ENCODE measurements at regions of chr19 and their contacts with region 1.

Region 1: GRCh38 chr19:40716655-40717324 is at the starts of genes COQ8B and ITPKC:
- DNase-seq: peak; percentile 100
- ATAC-seq: peak; percentile 65
- H3K4me3 Mint-ChIP-seq: peak within 1 kb of the TSS; percentile 93
- H3K27ac Mint-ChIP-seq: peak within 1 kb of the TSS; percentile 98
- H3K4me1 Mint-ChIP-seq: peaks cover 59% of the 10 kb centered on the region
- H3K27me3 Mint-ChIP-seq: no peaks in the 10 kb centered on the region
- total RNA-seq, gene COQ8B: 21.2 to 29.9 TPM
- total RNA-seq, gene ITPKC: 4.6 to 5.6 TPM

Region 2: GRCh38 chr19:39390755-39391592 is 1325.8 kb before region 1 on chr19 and contains the starts of genes MED29 and PAF1:
- CTCF ChIA-PET with region 1: no interaction called
- POLR2A ChIA-PET with region 1: no interaction called
- intact Hi-C with region 1: loop called in 1 of 2 experiments (anchors 5 kb)
- DNase-seq: peak; percentile 98
- ATAC-seq: peak; percentile 97
- H3K4me3 Mint-ChIP-seq: peak within 1 kb of the TSS; percentile 99
- H3K27ac Mint-ChIP-seq: peak within 1 kb of the TSS; percentile 98
- H3K4me1 Mint-ChIP-seq: peaks cover 28% of the 10 kb centered on the region
- H3K27me3 Mint-ChIP-seq: no peaks in the 10 kb centered on the region
- total RNA-seq, gene MED29: 24.0 to 34.6 TPM
- total RNA-seq, gene PAF1: 40.4 to 54.2 TPM

Region 3: GRCh38 chr19:40425450-40426287 is 291.1 kb before region 1 on chr19 and contains the start of gene SERTAD1:
- CTCF ChIA-PET with region 1: no interaction called
- POLR2A ChIA-PET with region 1: no interaction called
- intact Hi-C with region 1: loop called in 1 of 2 experiments (anchors 5 kb)
- DNase-seq: peak; percentile 100
- ATAC-seq: peak; percentile 91
- H3K4me3 Mint-ChIP-seq: peak within 1 kb of the TSS; percentile 89
- H3K27ac Mint-ChIP-seq: peak within 1 kb of the TSS; percentile 96
- H3K4me1 Mint-ChIP-seq: peaks cover 20% of the 10 kb centered on the region
- H3K27me3 Mint-ChIP-seq: no peaks in the 10 kb centered on the region
- total RNA-seq, gene SERTAD1: 10.0 to 14.7 TPM

Region 4: GRCh38 chr19:40614622-40615411 is 102.0 kb before region 1 on chr19:
- CTCF ChIA-PET with region 1: no interaction called
- POLR2A ChIA-PET with region 1: no interaction called
- intact Hi-C with region 1: loop called in 1 of 2 experiments (anchors 1 kb)
- DNase-seq: peak; percentile 98
- ATAC-seq: peak; percentile 55
- H3K4me3 Mint-ChIP-seq: peak overlapping the region; percentile 99
- H3K27ac Mint-ChIP-seq: peak overlapping the region; percentile 100
- H3K4me1 Mint-ChIP-seq: peaks cover 58% of the 10 kb centered on the region
- H3K27me3 Mint-ChIP-seq: no peaks in the 10 kb centered on the region

Region 5: GRCh38 chr19:40627486-40628279 is 89.1 kb before region 1 on chr19:
- CTCF ChIA-PET with region 1: no interaction called
- POLR2A ChIA-PET with region 1: no interaction called
- intact Hi-C with region 1: no loop called
- DNase-seq: no peak
- ATAC-seq: peak; percentile 48
- H3K4me3 Mint-ChIP-seq: no peak overlapping the region
- H3K27ac Mint-ChIP-seq: no peak overlapping the region
- H3K4me1 Mint-ChIP-seq: peaks cover 6% of the 10 kb centered on the region
- H3K27me3 Mint-ChIP-seq: no peaks in the 10 kb centered on the region

Region 6: DNA sequence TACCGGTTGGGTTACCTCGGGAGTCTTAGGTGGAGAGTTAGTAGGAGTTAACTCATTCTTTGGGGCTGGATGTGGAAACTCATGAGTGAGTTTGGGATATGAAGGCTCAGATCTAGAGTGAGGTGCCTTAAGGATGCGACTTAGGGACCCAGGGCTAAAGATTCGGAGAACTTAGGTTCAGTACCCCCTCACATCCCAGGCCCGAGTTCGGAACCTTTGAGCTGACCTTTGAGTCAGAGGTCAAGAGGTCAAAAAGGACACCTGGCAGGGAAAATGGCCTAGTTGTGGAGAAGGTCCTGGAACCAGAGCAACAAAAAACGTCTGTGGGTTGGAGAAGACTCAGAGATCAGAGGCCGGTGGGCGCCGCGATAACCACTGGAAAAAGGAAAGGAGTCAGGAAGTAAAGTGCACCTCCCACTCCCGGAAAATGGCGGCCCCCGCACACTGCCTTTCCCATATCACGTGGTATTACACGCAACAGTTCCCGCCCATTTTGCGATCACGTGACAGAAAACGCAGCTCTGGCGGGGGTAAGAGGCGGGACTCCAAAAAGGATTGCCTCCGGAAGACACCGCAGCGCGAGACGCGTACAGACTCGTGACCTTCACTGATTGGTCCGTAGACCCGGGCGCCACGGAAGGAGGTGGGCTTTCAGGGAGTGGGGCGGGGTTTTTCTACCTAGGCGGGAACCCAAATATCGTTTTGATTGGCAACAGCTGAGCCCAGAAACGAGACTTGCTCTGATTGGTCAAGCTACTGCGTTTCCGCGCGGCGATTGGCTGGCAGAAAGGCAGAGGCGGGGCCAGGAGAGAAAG is 33.5 kb after region 1 on chr19 and contains the start of gene ACTMAP:
- CTCF ChIA-PET with region 1: interaction called, 4 read pairs
- POLR2A ChIA-PET with region 1: interaction called, 21 read pairs
- intact Hi-C with region 1: loop called (anchors 1 kb)
- DNase-seq: peak; percentile 100
- ATAC-seq: peak; percentile 90
- H3K4me3 Mint-ChIP-seq: peak within 1 kb of the TSS; percentile 81
- H3K27ac Mint-ChIP-seq: peak within 1 kb of the TSS; percentile 99
- H3K4me1 Mint-ChIP-seq: peaks cover 34% of the 10 kb centered on the region
- H3K27me3 Mint-ChIP-seq: no peaks in the 10 kb centered on the region
- total RNA-seq, gene ACTMAP: 15.0 to 18.0 TPM

Region 7: DNA sequence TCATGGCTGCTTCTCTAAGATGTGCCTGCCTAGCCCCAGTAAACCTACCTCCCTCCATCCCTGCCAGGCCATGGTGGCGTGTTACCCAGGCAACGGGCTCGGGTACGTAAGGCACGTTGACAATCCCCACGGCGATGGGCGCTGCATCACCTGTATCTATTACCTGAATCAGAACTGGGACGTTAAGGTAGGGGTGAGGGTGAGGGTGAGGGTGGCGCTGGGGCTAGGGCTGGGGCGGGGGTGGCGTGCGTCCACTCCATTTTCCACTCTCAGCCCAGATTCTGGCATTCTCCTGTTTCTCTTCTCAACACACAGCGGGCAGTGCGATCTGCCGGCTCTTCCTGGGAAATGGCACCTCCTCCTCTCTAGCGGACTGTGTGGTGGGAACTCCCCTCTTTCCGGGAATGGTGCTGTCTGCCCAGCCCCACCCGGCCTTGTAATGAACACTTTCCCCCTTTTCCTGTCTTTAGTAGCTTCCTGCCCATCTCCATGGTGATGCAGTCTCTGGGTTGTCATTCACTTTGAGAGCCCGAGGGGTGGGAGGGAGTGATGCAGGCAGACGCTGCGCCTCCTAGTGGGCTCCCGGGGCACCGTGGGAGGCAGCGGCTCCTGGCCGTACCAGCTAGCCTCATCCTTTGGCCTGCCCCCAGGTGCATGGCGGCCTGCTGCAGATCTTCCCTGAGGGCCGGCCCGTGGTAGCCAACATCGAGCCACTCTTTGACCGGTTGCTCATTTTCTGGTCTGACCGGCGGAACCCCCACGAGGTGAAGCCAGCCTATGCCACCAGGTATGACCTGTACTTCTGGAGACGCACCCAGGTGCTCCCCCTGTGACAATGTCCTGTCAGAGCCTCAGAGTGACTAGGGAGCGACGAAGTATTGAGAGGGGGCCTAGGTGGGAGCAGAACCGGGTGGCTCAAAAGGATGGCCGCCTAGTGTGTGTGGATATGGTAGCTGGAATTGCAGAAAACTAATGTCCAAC is 90.0 kb after region 1 on chr19:
- CTCF ChIA-PET with region 1: interaction called, 11 read pairs
- POLR2A ChIA-PET with region 1: no interaction called
- intact Hi-C with region 1: loop called in 1 of 2 experiments (anchors 2 kb)
- DNase-seq: peak; percentile 90
- ATAC-seq: peak; percentile 51
- H3K4me3 Mint-ChIP-seq: peak overlapping the region; percentile 55
- H3K27ac Mint-ChIP-seq: peak overlapping the region; percentile 89
- H3K4me1 Mint-ChIP-seq: peaks cover 72% of the 10 kb centered on the region
- H3K27me3 Mint-ChIP-seq: no peaks in the 10 kb centered on the region

Region 8: DNA sequence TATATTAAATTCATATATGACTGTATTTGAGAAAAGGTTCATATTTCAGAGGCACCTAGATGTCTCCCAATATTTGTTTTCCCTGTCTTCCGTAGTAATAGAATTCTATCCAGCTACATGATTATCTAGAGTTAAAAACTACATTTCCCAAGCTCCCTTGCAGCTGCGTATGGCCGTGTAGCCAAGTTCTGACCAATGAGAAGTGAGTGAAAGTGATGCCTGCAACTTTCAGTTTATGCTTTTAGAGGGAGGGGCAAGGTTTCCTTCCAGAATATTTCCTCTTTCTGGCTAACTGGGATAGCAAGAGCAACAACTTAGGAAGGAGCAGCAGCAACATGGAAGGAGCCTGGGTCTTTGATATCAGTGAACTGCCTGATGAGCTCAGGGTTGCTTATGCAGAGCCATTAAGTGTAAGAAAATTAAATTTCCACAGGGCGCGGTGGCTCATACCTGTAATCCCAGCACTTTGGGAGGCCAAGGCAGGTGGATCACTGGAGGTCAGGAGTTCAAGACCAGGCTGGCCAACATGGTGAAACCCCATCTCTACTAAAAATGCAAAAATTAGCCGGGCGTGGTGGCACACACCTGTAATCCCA is 348.3 kb after region 1 on chr19:
- CTCF ChIA-PET with region 1: no interaction called
- POLR2A ChIA-PET with region 1: no interaction called
- intact Hi-C with region 1: no loop called
- DNase-seq: no peak
- ATAC-seq: no peak
- H3K4me3 Mint-ChIP-seq: no peak overlapping the region
- H3K27ac Mint-ChIP-seq: no peak overlapping the region
- H3K4me1 Mint-ChIP-seq: no peaks in the 10 kb centered on the region
- H3K27me3 Mint-ChIP-seq: peaks cover 12% of the 10 kb centered on the region

Region 9: GRCh38 chr19:41397086-41398049 is 680.6 kb after region 1 on chr19 and contains the starts of genes BCKDHA and EXOSC5:
- CTCF ChIA-PET with region 1: no interaction called
- POLR2A ChIA-PET with region 1: no interaction called
- intact Hi-C with region 1: loop called in 1 of 2 experiments (anchors 1 kb)
- DNase-seq: peak; percentile 99
- ATAC-seq: peak; percentile 100
- H3K4me3 Mint-ChIP-seq: peak within 1 kb of the TSS; percentile 97
- H3K27ac Mint-ChIP-seq: peak within 1 kb of the TSS; percentile 97
- H3K4me1 Mint-ChIP-seq: peaks cover 31% of the 10 kb centered on the region
- H3K27me3 Mint-ChIP-seq: no peaks in the 10 kb centered on the region
- total RNA-seq, gene BCKDHA: 14.5 to 25.4 TPM
- total RNA-seq, gene EXOSC5: 32.7 to 47.8 TPM

Measured in activated CD4-positive, alpha-beta T cell treated with anti-CD3 and anti-CD28 coated beads for 36 hours (primary cell).